GM13976 (cell line): ENCODE measurements at regions of chr4 and their contacts with region 1.

Region 1: GRCh38 chr4:184762100-184762499 is 28.2 kb upstream of the CENPU start:
- DNase-seq: peak; percentile 63
- CTCF ChIP-seq: no peak

Region 2: GRCh38 chr4:184978211-184978610 is 216.1 kb after region 1 on chr4:
- in situ Hi-C with region 1: loop called (anchors 10 kb)
- DNase-seq: no peak
- CTCF ChIP-seq: no peak

Region 3: GRCh38 chr4:185149392-185149791 is 387.3 kb after region 1 on chr4:
- in situ Hi-C with region 1: no loop called
- DNase-seq: no peak
- CTCF ChIP-seq: no peak